Endothelial cell of umbilical vein (primary cell): ENCODE measurements at regions of chr10 and their contacts with region 1.

Region 1: GRCh38 chr10:47296156-47296894 is 3.7 kb upstream of the GDF10 start:
- DNase-seq: no peak
- H3K4me3 ChIP-seq: no peak overlapping the region
- H3K27ac ChIP-seq: no peak overlapping the region
- H3K4me1 ChIP-seq: no peaks in the 10 kb centered on the region
- H3K27me3 ChIP-seq: peaks cover 21 to 33% of the 10 kb centered on the region in 2 experiments
- CTCF ChIP-seq: no peak
- POLR2A ChIP-seq: no peak

Region 2: GRCh38 chr10:47317251-47317650 is 20.9 kb after region 1 on chr10:
- CTCF ChIA-PET with region 1: interaction called, 18 read pairs
- POLR2A ChIA-PET with region 1: no interaction called
- dilution Hi-C with region 1: no loop called
- intact Hi-C with region 1: loop called (anchors 1 kb)
- DNase-seq: no peak
- H3K4me3 ChIP-seq: no peak overlapping the region
- H3K27ac ChIP-seq: no peak overlapping the region
- H3K4me1 ChIP-seq: no peaks in the 10 kb centered on the region
- H3K27me3 ChIP-seq: no peaks in the 10 kb centered on the region
- CTCF ChIP-seq: no peak
- POLR2A ChIP-seq: no peak